ENCODE measurements at regions of chr9 and their contacts with region 1.

Region 1: GRCh38 chr9:76810377-76810957 is 46.2 kb downstream of the PCA3 start:
- DNase-seq: peak; percentile 67
- H3K4me3 ChIP-seq: no peak overlapping the region
- H3K27ac ChIP-seq: no peak overlapping the region
- H3K4me1 ChIP-seq: no peaks in the 10 kb centered on the region
- H3K27me3 ChIP-seq: peaks cover 9 to 18% of the 10 kb centered on the region in 2 experiments
- CTCF ChIP-seq: peak; percentile 61 to 64
- POLR2A ChIP-seq: no peak

Region 2: DNA sequence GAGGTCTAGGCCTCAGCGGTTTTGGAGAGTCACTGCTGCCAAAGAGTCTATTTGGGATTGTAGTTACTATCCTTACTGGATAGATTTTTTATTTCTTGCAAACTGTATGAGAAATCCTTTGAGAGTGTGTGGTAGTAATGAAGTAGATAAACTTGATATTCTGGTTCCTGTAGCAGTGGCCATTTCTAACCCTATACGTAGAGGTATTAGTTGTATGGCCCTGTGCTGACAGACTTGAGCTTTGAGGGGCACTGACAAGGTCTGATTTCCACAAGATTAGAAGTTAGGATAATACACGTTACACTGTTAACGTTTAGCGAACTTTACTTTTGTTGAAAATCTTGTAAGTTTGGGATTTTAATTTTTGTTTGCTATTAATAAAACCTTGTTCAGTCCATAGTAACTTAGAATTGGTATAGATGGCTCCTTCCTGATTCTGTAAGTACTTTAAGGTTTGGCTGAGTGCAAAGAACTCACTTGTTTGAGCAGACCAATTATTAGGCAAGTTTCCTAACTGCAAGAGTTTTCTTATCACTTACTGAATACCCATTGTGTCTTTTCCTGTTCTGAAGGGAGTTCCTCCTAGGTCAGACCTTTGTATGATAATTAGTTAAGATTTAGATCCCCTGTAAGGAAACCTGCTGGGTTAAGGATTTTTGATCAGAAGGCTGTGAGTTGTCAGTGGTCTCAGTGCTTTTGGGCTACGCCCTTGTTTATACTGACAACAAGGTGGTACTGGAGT is 320.0 kb before region 1 on chr9:
- CTCF ChIA-PET with region 1: no interaction called
- POLR2A ChIA-PET with region 1: no interaction called
- dilution Hi-C with region 1: no loop called
- intact Hi-C with region 1: no loop called
- DNase-seq: peak; percentile 60
- H3K4me3 ChIP-seq: no peak overlapping the region
- H3K27ac ChIP-seq: no peak overlapping the region
- H3K4me1 ChIP-seq: peaks cover 10% of the 10 kb centered on the region
- H3K27me3 ChIP-seq: no peaks in the 10 kb centered on the region
- CTCF ChIP-seq: no peak
- POLR2A ChIP-seq: no peak

Region 3: GRCh38 chr9:76987594-76988200 is 177.2 kb after region 1 on chr9:
- CTCF ChIA-PET with region 1: interaction called, 210 read pairs
- POLR2A ChIA-PET with region 1: no interaction called
- dilution Hi-C with region 1: no loop called
- intact Hi-C with region 1: loop called (anchors 1 kb)
- DNase-seq: peak; percentile 15
- H3K4me3 ChIP-seq: no peak overlapping the region
- H3K27ac ChIP-seq: no peak overlapping the region
- H3K4me1 ChIP-seq: no peaks in the 10 kb centered on the region
- H3K27me3 ChIP-seq: peaks cover 7 to 10% of the 10 kb centered on the region in 2 experiments
- CTCF ChIP-seq: peak; percentile 17 to 23
- POLR2A ChIP-seq: no peak

Region 4: GRCh38 chr9:76996700-76997099 is 186.2 kb after region 1 on chr9:
- CTCF ChIA-PET with region 1: interaction called, 210 read pairs
- POLR2A ChIA-PET with region 1: no interaction called
- dilution Hi-C with region 1: no loop called
- intact Hi-C with region 1: no loop called
- DNase-seq: no peak
- H3K4me3 ChIP-seq: no peak overlapping the region
- H3K27ac ChIP-seq: no peak overlapping the region
- H3K4me1 ChIP-seq: no peaks in the 10 kb centered on the region
- H3K27me3 ChIP-seq: peaks cover 2 to 7% of the 10 kb centered on the region in 2 experiments
- CTCF ChIP-seq: peak; percentile 23 to 61
- POLR2A ChIP-seq: no peak

Region 5: DNA sequence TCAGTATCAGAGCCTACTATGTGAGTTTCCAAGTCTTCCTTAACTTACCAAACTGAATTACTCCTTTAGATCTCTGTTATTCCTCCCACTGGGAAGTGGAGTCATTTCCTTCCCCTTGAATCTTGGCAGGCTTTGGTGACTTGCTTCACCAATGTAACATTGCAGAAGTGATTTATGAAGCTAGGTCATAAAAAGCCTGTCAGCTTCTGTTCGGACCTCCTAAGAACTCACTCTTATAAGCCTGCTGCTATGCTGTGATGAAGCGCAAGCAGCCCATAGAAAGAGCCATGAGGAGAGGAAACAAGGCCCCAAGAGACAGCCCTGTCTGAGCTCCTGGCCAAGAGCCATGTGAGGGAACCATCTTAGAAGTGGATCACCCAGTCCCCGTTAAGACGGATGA is 194.7 kb after region 1 on chr9:
- CTCF ChIA-PET with region 1: interaction called, 210 read pairs
- POLR2A ChIA-PET with region 1: interaction called, 3 read pairs
- dilution Hi-C with region 1: no loop called
- intact Hi-C with region 1: no loop called
- DNase-seq: peak; percentile 79
- H3K4me3 ChIP-seq: no peak overlapping the region
- H3K27ac ChIP-seq: no peak overlapping the region
- H3K4me1 ChIP-seq: peaks cover 3% of the 10 kb centered on the region
- H3K27me3 ChIP-seq: peaks cover 7 to 21% of the 10 kb centered on the region in 2 experiments
- CTCF ChIP-seq: no peak
- POLR2A ChIP-seq: no peak

Region 6: GRCh38 chr9:77011973-77012821 is 201.7 kb after region 1 on chr9:
- CTCF ChIA-PET with region 1: interaction called, 58 read pairs
- POLR2A ChIA-PET with region 1: interaction called, 3 read pairs
- dilution Hi-C with region 1: no loop called
- intact Hi-C with region 1: loop called (anchors 1 kb)
- DNase-seq: peak; percentile 54
- H3K4me3 ChIP-seq: no peak overlapping the region
- H3K27ac ChIP-seq: no peak overlapping the region
- H3K4me1 ChIP-seq: peaks cover 7% of the 10 kb centered on the region
- H3K27me3 ChIP-seq: peaks cover 70 to 91% of the 10 kb centered on the region in 2 experiments
- CTCF ChIP-seq: peak; percentile 87 to 90
- POLR2A ChIP-seq: no peak

Region 7: DNA sequence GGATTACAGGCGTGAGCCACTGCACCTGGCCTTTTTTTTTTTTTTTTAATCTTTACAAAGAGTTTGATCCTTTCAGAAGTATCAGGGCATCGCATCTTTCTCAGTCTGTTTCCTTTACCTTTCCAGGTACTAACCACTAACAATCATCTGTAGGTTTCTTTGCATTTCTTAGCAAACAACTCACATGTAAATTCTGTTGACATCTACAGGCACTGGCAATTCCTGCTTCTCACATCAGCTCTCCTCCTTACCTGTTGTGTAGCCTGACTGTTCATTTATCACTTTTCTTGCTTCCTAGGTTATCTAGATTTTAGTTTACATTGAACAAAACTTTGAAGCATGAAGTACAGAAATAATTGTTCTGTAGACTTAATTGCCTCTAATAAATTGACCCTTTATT is 339.4 kb after region 1 on chr9:
- CTCF ChIA-PET with region 1: interaction called, 123 read pairs
- POLR2A ChIA-PET with region 1: no interaction called
- dilution Hi-C with region 1: no loop called
- intact Hi-C with region 1: loop called (anchors 1 kb)
- DNase-seq: no peak
- H3K4me3 ChIP-seq: no peak overlapping the region
- H3K27ac ChIP-seq: no peak overlapping the region
- H3K4me1 ChIP-seq: peaks cover 2% of the 10 kb centered on the region
- H3K27me3 ChIP-seq: peaks cover 8 to 28% of the 10 kb centered on the region in 2 experiments
- CTCF ChIP-seq: no peak
- POLR2A ChIP-seq: no peak

Measured in endothelial cell of umbilical vein (primary cell).